OCI-LY7 (cell line): ENCODE measurements at regions of chr1 and their contacts with region 1.

Region 1: GRCh38 chr1:24744911-24745710 is at the start of gene CLIC4:
- DNase-seq: peak; percentile 99
- H3K4me3 ChIP-seq: peak within 1 kb of the TSS; percentile 94
- H3K27ac ChIP-seq: peak within 1 kb of the TSS; percentile 93
- H3K4me1 ChIP-seq: peaks cover 63% of the 10 kb centered on the region
- CTCF ChIP-seq: 0 out of 2 replicates have a peak, but pooled peaks have one; percentile 31
- total RNA-seq, gene CLIC4: 35.5 and 35.7 TPM in 2 replicates

Region 2: DNA sequence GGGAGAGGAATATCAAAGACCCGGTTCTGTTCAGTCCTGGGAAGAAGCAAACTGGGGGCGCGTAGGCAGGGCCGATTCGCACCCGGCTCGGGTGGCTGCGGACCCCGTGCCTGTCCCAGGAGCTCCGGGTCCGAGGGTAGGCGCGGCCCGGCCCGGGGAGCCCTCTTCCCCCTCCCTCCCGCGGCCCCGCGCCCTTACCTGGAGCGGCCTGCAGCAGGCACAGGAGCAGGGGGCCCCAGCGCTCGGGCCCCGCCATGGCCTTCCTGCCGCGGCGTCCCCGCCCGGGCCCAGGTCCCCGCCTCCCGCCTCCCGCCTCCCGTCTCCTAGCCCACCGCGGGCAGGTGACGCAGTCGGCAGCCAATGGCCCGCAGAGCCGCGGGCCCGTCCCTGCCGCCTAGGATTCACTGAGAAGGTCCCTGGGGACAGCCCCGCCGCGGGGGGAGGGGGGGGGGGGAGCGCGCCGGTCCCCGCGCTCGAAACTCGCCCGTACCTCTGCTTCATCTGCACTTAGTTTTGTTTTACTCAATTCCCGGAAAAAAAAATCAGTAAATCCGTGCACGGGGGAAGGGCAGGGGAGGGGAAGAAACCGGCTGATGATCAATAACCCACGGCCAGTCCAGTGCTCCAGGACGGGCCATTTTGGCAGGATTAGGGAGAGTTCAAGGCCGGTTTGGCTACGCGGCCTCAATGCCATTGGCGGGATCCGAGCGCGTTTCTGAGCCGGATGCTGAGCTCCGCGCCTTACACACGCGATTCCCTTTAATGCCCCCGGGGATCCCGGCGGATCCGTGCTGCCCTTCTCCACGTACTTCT is 557.9 kb before region 1 on chr1 and contains the start of gene IFNLR1:
- CTCF ChIA-PET with region 1: no interaction called
- POLR2A ChIA-PET with region 1: no interaction called
- intact Hi-C with region 1: loop called (anchors 5 kb)
- DNase-seq: peak; percentile 91
- H3K4me3 ChIP-seq: peak within 1 kb of the TSS; percentile 97
- H3K27ac ChIP-seq: peak within 1 kb of the TSS; percentile 100
- H3K4me1 ChIP-seq: peaks cover 81% of the 10 kb centered on the region
- CTCF ChIP-seq: no peak
- total RNA-seq, gene IFNLR1: 24.6 and 29.4 TPM in 2 replicates

Region 3: DNA sequence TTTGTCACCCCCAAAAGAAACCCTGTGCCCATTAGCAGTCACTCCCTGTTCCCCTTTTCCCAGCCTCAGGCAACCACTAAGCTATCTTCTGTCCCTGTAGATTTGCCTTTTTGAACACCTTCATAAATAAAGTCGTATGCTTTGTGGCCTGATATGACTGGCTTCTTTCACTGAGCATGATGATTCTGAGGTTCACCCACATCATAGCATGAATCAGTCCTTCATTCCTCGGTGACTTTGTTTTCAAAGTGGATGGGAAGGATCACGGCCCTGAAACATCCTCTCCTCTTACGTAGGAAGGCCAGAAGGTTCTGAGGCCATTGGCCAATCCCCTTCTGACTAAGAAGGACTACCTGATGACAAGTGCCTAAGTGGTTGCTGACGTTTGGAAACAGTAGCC is 290.4 kb before region 1 on chr1:
- CTCF ChIA-PET with region 1: no interaction called
- POLR2A ChIA-PET with region 1: no interaction called
- intact Hi-C with region 1: no loop called
- DNase-seq: no peak
- H3K4me3 ChIP-seq: no peak overlapping the region
- H3K27ac ChIP-seq: no peak overlapping the region
- H3K4me1 ChIP-seq: peaks cover 33% of the 10 kb centered on the region
- CTCF ChIP-seq: no peak

Region 4: DNA sequence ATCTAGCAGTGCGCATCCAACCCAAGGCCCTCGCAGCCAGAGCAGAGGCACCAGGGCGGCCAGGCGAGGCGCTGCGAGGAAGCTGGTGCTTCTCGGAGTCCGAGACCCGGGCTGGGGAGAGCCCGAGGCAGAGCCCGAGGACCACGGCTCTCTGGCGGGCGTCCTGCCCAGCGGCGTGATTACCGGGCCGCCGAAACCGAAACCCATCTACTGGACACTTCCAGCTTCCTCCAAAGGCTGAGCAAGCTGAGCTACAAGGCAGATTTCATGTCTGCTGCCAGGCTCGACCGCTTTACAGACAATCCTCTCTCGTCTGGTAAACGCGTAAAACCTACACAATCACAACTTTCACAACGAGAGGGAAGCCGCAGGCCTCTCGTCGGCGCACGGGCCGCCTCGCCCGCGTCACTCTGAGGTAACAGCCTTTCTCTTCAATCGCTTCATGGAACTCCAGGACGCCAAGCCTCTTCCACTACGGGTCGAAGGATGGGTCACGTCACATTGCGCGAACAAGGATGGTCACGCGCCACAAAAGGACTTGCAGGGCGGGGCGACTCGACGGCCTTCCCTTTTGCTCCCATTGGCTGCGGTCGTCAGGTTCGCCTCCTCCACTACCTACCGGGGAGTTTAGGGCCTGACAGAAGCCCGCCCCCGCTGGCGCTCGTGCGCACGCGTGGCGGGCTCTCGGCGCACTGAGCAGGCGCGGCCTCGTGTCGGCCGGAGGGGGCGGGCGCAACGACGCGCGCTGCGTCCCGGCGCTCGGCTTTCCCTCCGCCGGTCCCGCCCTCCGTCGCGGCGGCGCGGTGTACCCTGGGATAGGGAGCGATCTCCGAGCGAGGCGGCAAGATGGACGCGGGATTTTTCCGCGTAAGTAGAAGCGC is 102.4 kb before region 1 on chr1 and contains the start of gene SRRM1:
- CTCF ChIA-PET with region 1: no interaction called
- POLR2A ChIA-PET with region 1: no interaction called
- intact Hi-C with region 1: loop called (anchors 1 kb)
- DNase-seq: peak; percentile 99
- H3K4me3 ChIP-seq: peak within 1 kb of the TSS; percentile 83
- H3K27ac ChIP-seq: peak within 1 kb of the TSS; percentile 82
- H3K4me1 ChIP-seq: peaks cover 22% of the 10 kb centered on the region
- CTCF ChIP-seq: peak; percentile 51
- total RNA-seq, gene SRRM1: 72.5 and 78.5 TPM in 2 replicates

Region 5: DNA sequence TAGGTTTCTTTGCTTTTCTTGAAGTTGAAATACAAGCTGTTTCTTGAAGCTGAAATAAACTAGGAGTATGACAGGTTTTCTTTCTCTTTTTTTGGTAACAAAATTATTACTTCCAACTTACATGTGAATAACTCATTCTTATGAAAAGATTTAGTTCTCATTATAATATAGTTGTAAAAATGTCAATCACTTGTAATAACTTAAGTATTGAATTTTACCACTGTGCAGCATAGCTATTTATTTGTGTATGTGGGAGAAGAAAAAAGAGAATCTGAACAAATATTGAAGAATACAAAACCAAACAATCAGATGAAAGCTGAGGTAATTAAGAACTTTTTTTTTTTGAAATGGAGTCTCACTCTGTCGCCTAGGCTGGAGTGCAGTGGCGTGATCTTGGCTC is 11.3 kb after region 1 on chr1:
- CTCF ChIA-PET with region 1: no interaction called
- POLR2A ChIA-PET with region 1: interaction called, 10 read pairs
- intact Hi-C with region 1: no loop called
- DNase-seq: no peak
- H3K4me3 ChIP-seq: no peak overlapping the region
- H3K27ac ChIP-seq: no peak overlapping the region
- H3K4me1 ChIP-seq: peaks cover 19% of the 10 kb centered on the region
- CTCF ChIP-seq: no peak

Region 6: GRCh38 chr1:24909388-24909898 is 164.3 kb after region 1 on chr1:
- CTCF ChIA-PET with region 1: no interaction called
- POLR2A ChIA-PET with region 1: no interaction called
- intact Hi-C with region 1: no loop called
- DNase-seq: no peak
- H3K4me3 ChIP-seq: no peak overlapping the region
- H3K27ac ChIP-seq: no peak overlapping the region
- H3K4me1 ChIP-seq: no peaks in the 10 kb centered on the region
- CTCF ChIP-seq: peak; percentile 39

Region 7: GRCh38 chr1:25239681-25240541 is 494.8 kb after region 1 on chr1:
- CTCF ChIA-PET with region 1: no interaction called
- POLR2A ChIA-PET with region 1: no interaction called
- intact Hi-C with region 1: loop called (anchors 10 kb)
- DNase-seq: peak; percentile 93
- H3K4me3 ChIP-seq: peak overlapping the region; percentile 64
- H3K27ac ChIP-seq: peak overlapping the region; percentile 84
- H3K4me1 ChIP-seq: peaks cover 79% of the 10 kb centered on the region
- CTCF ChIP-seq: peak; percentile 75